T-cell (primary cell): ENCODE measurements at regions of chr14 and their contacts with region 1.

Region 1: DNA sequence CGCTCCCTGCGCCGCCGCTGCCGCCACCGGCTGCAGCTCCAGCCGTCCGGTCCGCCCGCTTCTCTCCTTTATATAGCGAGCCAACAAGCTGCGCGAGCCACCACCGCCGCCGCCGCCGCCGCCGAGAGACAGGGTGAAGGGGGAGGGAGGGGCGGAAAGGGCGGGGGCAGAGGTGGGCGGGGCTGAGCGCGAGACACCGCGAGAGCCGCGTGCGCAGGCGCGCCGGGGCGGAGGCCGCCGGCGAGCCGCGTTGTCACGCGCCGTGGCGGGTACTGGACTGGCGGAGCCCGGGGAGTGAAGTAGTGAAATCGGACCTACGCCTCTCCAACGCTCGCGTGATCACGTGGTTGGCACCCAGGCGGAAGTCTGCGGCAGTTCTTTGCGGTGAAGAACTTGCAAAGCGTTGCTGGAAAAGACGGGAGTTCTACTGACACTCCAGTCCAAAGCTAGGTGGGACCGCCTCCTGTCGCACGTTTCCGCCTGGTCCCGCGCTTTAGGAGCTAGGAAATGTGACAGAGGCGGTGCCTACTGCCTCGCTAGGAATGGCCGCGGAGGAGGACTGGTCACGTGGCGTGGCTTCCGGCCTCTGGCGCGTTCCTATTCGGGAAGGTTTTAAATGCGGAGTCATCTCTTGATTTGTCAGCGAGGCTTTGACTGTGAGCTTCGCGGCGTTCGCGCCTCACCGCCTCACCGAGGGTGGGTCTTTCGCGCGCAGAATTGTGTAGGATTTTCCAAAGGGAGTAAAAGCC is at the start of gene GTF2A1:
- DNase-seq: peak; percentile 84 to 97 (median 93)
- ATAC-seq: peak; percentile 71 to 81 (median 78)
- H3K4me3 ChIP-seq: peak within 1 kb of the TSS; percentile 95 to 99
- H3K4me3 Mint-ChIP-seq: peak within 1 kb of the TSS; percentile 94 to 100 (median 98)
- H3K27ac ChIP-seq: peak within 1 kb of the TSS; percentile 99
- H3K27ac Mint-ChIP-seq: peak within 1 kb of the TSS; percentile 99
- H3K4me1 ChIP-seq: peaks cover 12 to 16% of the 10 kb centered on the region in 2 experiments
- H3K4me1 Mint-ChIP-seq: peaks cover 35 to 42% (median 38%) of the 10 kb centered on the region in 3 donors
- H3K27me3 ChIP-seq: no peaks in the 10 kb centered on the region
- H3K27me3 Mint-ChIP-seq: no peaks in the 10 kb centered on the region
- total RNA-seq, gene GTF2A1: 21.2 to 34.1 (median 29.3) TPM

Region 2: DNA sequence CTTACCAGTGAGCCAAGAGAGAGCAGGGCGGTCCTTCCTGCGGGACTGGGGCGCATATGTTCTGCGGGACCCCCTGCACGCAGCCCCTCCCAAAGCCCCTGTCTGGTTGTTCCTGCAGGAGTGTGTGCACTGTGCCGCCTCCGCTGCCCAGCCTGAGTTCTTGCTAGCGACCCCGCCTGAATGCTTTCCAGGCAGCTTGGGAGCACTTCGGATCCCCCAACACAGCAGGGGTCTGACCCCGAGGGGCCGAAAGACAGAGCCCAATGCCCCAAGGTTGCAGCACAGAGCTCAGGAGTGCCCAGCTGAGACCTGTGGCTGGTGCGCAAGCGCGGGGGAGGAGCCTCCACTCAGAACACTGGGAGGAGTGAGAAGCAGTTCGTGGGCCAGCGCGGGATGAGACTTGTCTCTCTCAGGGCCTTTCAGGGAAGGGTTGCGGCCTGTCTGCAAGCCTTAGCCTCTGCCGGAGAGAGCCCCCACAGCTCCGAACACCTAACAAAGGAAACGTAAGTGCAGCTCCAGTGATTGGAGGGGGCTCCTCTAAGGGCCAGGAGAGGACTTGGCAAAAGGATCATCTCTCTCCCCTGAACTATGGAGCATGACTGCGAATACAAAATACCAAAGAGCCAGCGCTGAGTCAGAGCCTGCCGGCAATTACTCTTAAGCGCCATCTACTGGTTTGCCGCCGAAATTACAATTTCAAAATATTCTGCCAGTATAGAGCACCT is 50.7 kb before region 1 on chr14:
- CTCF ChIA-PET with region 1: interaction called, 5 to 13 read pairs
- POLR2A ChIA-PET with region 1: interaction called, 3 to 13 read pairs
- DNase-seq: peak; percentile 76 to 92 (median 85)
- ATAC-seq: peak; percentile 98 to 99 (median 98)
- H3K4me3 ChIP-seq: peak overlapping the region; percentile 74 to 85
- H3K4me3 Mint-ChIP-seq: peak overlapping the region; percentile 85 to 89 (median 88)
- H3K27ac ChIP-seq: peak overlapping the region; percentile 80
- H3K27ac Mint-ChIP-seq: peak overlapping the region; percentile 93 to 97
- H3K4me1 ChIP-seq: peaks cover 8 to 17% of the 10 kb centered on the region in 2 experiments
- H3K4me1 Mint-ChIP-seq: peaks cover 20 to 27% (median 24%) of the 10 kb centered on the region in 3 donors
- H3K27me3 ChIP-seq: no peaks in the 10 kb centered on the region
- H3K27me3 Mint-ChIP-seq: no peaks in the 10 kb centered on the region

Region 3: DNA sequence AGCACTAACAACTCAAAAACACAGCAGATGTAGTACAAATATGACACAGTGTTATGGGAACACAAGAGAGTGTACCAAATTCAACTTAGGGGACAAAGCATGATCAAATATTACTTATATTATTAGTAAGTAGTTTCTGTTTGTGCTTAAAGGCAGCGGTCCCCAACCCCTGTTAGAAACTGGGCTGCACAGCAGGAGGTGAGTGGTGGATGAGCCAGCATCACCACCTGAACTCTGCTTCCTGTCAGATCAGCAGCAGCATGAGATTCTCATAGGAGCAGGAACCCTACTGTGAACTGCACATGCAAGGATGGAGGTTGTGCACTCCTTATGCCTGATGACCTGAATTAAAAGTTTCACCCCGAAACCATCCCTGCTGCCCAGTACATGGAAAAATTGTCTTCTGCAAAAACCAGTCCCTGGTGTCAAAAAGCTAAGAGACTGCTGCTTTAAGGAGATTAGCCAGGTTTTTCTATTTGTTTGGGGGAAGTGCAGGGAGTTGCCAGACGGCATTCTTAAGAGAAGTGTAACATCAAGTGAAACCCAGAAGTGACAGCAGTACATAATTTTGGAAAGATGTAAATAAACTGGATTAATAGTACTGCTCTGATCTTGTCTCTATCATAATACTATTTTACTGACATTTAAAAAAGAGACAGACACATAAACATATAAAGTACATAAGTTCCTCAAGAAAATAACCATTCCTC is 26.9 kb before region 1 on chr14:
- CTCF ChIA-PET with region 1: interaction called in 1 of 2 experiments, 5 read pairs
- POLR2A ChIA-PET with region 1: interaction called, 5 to 10 read pairs
- DNase-seq: no peak
- ATAC-seq: peak in 2 of 4 experiments; percentile 30 to 44
- H3K4me3 ChIP-seq: no peak overlapping the region
- H3K4me3 Mint-ChIP-seq: no peak overlapping the region
- H3K27ac ChIP-seq: no peak overlapping the region
- H3K27ac Mint-ChIP-seq: peak overlapping the region; percentile 53 to 73
- H3K4me1 ChIP-seq: peaks cover 8 to 25% of the 10 kb centered on the region in 2 experiments
- H3K4me1 Mint-ChIP-seq: peaks cover 43 to 56% (median 47%) of the 10 kb centered on the region in 3 donors
- H3K27me3 ChIP-seq: no peaks in the 10 kb centered on the region
- H3K27me3 Mint-ChIP-seq: no peaks in the 10 kb centered on the region

Region 4: GRCh38 chr14:81348061-81348460 is 127.1 kb after region 1 on chr14:
- CTCF ChIA-PET with region 1: no interaction called
- POLR2A ChIA-PET with region 1: interaction called in 1 of 2 experiments, 10 read pairs
- DNase-seq: no peak
- ATAC-seq: no peak
- H3K4me3 ChIP-seq: no peak overlapping the region
- H3K4me3 Mint-ChIP-seq: no peak overlapping the region
- H3K27ac ChIP-seq: no peak overlapping the region
- H3K27ac Mint-ChIP-seq: no peak overlapping the region
- H3K4me1 ChIP-seq: no peaks in the 10 kb centered on the region
- H3K4me1 Mint-ChIP-seq: no peaks in the 10 kb centered on the region
- H3K27me3 ChIP-seq: no peaks in the 10 kb centered on the region
- H3K27me3 Mint-ChIP-seq: peaks cover 15% of the 10 kb centered on the region in 2 donors

Region 5: DNA sequence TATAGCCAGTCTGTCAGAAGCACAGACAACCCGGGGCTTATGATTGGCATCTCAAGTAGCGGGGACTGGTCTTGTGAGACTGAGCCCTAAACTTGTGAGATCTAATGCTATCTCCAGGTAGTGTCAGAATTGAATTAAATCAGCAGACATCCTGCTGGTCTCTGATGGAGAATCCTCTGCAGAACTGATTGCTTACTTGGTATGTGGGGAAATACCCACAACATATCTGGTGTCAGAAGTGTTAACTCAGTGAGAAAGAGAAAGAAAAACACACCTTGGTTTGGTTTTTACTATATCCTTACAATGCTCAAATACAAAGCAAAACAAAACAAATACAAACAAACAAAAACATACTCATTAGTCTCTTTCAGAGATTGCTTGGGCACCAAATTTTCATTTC is 302.6 kb after region 1 on chr14:
- CTCF ChIA-PET with region 1: no interaction called
- POLR2A ChIA-PET with region 1: no interaction called
- DNase-seq: no peak
- ATAC-seq: no peak
- H3K4me3 ChIP-seq: no peak overlapping the region
- H3K4me3 Mint-ChIP-seq: no peak overlapping the region
- H3K27ac ChIP-seq: no peak overlapping the region
- H3K27ac Mint-ChIP-seq: no peak overlapping the region
- H3K4me1 ChIP-seq: peaks cover 10 to 16% of the 10 kb centered on the region in 2 experiments
- H3K4me1 Mint-ChIP-seq: peaks cover 63 to 70% (median 68%) of the 10 kb centered on the region in 3 donors
- H3K27me3 ChIP-seq: no peaks in the 10 kb centered on the region
- H3K27me3 Mint-ChIP-seq: no peaks in the 10 kb centered on the region

Region 6: GRCh38 chr14:81533536-81534343 is 312.7 kb after region 1 on chr14 and contains the start of gene SEL1L:
- CTCF ChIA-PET with region 1: interaction called in 1 of 2 experiments, 4 read pairs
- POLR2A ChIA-PET with region 1: interaction called, 3 to 12 read pairs
- DNase-seq: peak; percentile 96 to 100 (median 99)
- ATAC-seq: peak; percentile 94 to 98 (median 96)
- H3K4me3 ChIP-seq: peak within 1 kb of the TSS; percentile 90 to 96
- H3K4me3 Mint-ChIP-seq: peak within 1 kb of the TSS; percentile 84 to 96 (median 93)
- H3K27ac ChIP-seq: peak within 1 kb of the TSS; percentile 64
- H3K27ac Mint-ChIP-seq: peak within 1 kb of the TSS; percentile 80 to 84
- H3K4me1 ChIP-seq: peaks cover 12 to 23% of the 10 kb centered on the region in 2 experiments
- H3K4me1 Mint-ChIP-seq: peaks cover 59 to 62% (median 62%) of the 10 kb centered on the region in 3 donors
- H3K27me3 ChIP-seq: peaks cover 0 to under 1% of the 10 kb centered on the region in 2 experiments
- H3K27me3 Mint-ChIP-seq: peaks cover 0 to 7% of the 10 kb centered on the region in 2 donors
- total RNA-seq, gene SEL1L: 44.2 to 55.2 (median 52.7) TPM